Sigmoid colon (tissue), 7 donors: ENCODE measurements at regions of chr5 and their contacts with region 1.

Region 1: DNA sequence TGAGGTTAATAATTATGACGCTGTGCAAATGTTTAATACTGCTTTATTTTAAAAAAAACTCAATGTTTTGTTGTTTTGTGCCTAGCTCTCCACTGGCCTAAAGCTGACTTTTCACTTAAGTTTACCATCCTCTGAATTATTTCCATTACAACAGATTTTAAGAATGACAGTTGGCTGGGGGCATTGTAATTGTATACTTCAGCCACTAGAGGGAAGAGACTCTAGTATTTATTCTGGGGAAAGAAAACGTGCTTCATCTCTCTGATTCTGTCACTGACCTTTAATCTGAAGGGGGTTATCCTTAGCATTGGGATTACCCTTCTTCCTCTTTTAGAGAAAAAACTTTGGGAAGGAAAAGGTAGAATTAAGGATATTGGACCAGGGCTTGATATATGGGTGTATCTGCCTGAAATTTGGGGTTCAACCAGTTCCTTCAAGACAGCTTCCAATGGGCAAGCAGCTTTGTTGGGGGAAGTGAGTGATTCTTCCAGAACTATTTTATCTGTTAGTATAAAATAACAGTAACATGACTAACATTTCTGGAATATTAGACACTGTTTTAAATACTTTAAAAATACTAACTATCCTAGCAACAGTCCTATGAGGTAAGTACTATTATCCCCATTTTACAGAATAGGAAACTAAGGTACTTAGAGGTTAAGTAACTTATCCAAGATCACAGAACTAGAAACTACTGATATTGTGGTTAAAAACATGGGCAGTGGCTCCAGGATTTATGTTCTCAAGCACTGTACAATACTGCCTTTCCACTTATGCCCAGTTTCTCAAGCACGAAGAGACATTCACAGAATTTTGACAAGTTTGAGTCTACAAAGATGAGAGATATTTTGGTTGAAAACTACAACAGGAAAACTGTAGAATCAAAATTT is 208.4 kb downstream of the CD180 start:
- DNase-seq: no peak
- H3K4me3 ChIP-seq: no peak overlapping the region
- H3K27ac ChIP-seq: no peak overlapping the region
- H3K4me1 ChIP-seq: peaks cover 0 to 13% (median 3%) of the 10 kb centered on the region in 4 donors
- H3K27me3 ChIP-seq: no peaks in the 10 kb centered on the region
- CTCF ChIP-seq: peak; percentile 44 to 88 (median 83)
- EP300 ChIP-seq: no peak
- POLR2A ChIP-seq: no peak

Region 2: DNA sequence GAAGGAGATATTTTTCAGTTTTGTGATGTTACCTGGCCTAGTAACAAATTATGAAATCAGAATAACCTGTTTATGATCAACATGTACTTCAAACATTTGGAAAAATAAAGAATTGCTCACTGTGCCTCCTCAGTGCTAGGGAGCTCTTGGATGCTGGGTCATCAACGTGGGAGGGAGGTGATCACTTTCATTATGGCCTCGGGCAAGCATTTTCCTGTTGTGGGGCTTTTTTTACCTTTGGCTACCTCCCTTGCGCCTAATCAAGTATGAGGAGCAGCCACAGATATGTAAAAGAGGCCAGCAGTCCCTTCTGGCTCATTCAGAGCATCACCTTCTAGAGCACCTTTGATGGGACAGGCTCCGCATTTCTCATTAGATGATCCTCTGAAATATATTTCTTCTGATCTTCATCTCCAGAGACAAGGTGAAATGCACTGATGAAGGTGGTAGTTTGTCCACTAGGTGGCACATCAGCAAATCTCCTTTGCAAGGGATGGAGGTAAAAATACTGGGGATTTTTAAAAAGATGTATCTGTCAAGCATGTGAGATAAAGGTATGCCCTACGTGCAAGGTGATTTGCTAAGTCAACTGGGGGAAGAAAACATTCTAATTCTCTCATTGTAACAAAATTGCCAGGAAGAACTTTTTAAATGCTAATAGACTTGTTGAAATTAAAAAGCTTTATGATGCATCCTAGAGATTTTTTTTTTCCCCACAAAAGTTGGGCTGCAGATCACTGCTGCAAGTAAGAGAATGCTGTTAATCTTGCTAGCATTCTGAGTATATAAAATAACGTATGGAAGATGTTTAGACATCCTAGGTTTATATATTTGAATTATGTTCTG is 173.8 kb before region 1 on chr5:
- intact Hi-C with region 1: loop called (anchors 10 kb)
- DNase-seq: no peak
- H3K4me3 ChIP-seq: no peak overlapping the region
- H3K27ac ChIP-seq: no peak overlapping the region
- H3K4me1 ChIP-seq: peaks cover 0 to 2% (median 0%) of the 10 kb centered on the region in 4 donors
- H3K27me3 ChIP-seq: no peaks in the 10 kb centered on the region
- CTCF ChIP-seq: peak in 3 of 4 experiments; percentile 37 to 72 (median 38)
- EP300 ChIP-seq: no peak
- POLR2A ChIP-seq: no peak

Region 3: GRCh38 chr5:67149951-67150523 is 161.8 kb after region 1 on chr5:
- intact Hi-C with region 1: loop called (anchors 5 kb)
- DNase-seq: no peak
- H3K4me3 ChIP-seq: peak overlapping the region in 2 of 4 donors; percentile 19 to 23
- H3K27ac ChIP-seq: peak overlapping the region in 1 of 4 donors; percentile 43
- H3K4me1 ChIP-seq: no peaks in the 10 kb centered on the region
- H3K27me3 ChIP-seq: no peaks in the 10 kb centered on the region
- CTCF ChIP-seq: peak in 3 of 4 experiments; percentile 37 to 46 (median 37)
- EP300 ChIP-seq: no peak
- POLR2A ChIP-seq: no peak

Region 4: DNA sequence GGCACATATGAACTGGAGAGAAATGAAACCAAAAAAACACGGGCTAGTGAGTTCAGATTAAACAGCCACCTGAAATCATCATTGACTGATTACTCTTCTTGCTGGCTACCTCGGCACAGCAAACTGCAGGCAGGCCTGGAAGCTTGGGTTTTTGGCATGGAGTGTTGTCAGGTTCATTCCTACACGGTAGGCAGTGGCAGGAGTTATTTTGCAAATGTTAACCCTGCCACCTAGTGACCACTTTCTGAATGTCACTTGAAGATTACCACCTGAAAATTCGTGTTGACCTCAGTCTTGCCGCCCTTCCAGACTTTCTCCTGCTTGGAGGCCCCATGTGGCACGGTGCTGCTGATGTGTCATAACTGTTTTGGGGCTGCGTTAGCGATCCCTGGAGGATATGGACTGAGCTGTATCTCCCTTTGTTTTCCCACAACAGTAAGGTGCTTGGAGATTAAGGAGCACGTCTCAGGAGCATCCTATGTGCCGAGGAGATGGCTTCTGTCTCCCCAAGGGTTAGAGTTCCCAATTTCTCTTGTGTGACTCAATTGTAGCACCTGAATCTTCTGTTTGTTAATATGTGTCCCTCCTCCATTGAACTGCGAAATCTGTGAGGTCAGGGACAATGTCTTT is 221.1 kb after region 1 on chr5:
- intact Hi-C with region 1: loop called (anchors 5 kb)
- DNase-seq: peak; percentile 78
- H3K4me3 ChIP-seq: no peak overlapping the region
- H3K27ac ChIP-seq: no peak overlapping the region
- H3K4me1 ChIP-seq: peaks cover 0 to 8% (median 3%) of the 10 kb centered on the region in 4 donors
- H3K27me3 ChIP-seq: no peaks in the 10 kb centered on the region
- CTCF ChIP-seq: peak; percentile 74 to 76 (median 75)
- EP300 ChIP-seq: no peak
- POLR2A ChIP-seq: no peak

Region 5: DNA sequence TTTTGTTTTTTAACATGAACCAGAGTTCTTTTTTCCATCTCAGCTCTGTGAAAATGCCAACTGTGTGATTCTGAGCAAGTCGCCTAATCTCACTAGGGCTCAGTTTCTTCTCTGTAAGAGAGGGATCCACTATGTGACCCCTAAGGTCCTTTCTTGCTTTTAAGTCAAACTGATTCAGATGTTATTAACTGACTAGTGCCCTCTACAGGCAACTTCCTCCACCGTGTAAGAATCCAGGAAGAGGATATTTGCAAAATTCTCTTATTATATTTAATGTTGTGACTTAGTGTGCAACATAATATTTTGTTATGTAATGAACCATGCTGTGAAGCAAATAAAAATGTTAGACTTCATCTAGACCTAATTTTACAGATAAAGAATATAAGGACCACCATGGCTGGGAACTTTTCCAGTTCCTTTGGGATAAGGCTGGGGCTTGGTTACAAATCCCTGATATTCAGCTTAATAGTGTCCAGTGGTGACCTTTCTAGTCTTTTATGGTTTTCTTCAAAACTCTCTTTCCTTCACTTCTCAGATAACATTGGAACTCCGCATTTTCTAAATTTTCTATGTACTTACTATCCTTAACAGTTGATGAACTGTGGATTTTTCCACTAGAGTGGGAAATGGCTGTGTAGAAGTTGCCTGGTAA is 1472.1 kb after region 1 on chr5:
- intact Hi-C with region 1: loop called (anchors 10 kb)
- DNase-seq: no peak
- H3K4me3 ChIP-seq: no peak overlapping the region
- H3K27ac ChIP-seq: no peak overlapping the region
- H3K4me1 ChIP-seq: peaks cover 0 to 18% (median 11%) of the 10 kb centered on the region in 4 donors
- H3K27me3 ChIP-seq: no peaks in the 10 kb centered on the region
- CTCF ChIP-seq: peak in 3 of 4 experiments; percentile 38 to 62 (median 45)
- EP300 ChIP-seq: no peak
- POLR2A ChIP-seq: no peak